MCF 10A (cell line): ENCODE measurements at regions of chr11 and their contacts with region 1.

Region 1: DNA sequence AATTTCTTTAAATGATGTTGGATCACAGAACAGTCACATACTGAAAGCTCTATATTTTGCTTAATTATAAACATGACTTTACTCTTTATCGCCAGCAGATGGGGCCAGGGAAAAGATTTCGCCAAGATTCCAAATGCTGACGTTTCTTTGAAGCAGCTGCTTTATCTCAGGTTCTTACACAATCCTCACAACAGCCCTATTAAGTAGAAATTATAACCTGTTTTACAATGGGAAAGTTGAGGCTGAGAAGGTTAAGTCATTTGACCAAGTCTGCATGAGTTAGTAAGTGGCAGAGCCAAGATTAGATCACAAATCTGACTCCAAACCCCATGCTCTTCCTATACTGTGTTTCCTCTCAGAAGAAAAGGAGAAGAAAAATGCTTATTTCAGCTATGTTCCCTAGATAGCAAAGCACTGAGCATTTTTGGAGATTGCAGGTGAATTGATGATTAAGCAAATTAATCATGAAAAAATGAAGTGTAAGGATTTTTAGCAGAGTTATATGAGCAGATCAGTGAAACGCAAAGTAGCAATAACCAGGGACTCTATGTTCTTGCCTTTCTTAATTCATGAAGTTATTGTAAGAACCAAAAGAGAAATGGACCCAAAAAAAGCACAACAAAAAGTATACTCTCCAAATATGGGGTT is 79.0 kb downstream of the AASDHPPT start:
- DNase-seq: peak; percentile 69
- H3K4me3 Mint-ChIP-seq: no peak overlapping the region
- H3K27ac Mint-ChIP-seq: peak overlapping the region; percentile 82
- H3K4me1 Mint-ChIP-seq: peaks cover 13% of the 10 kb centered on the region
- H3K27me3 Mint-ChIP-seq: no peaks in the 10 kb centered on the region
- CTCF ChIP-seq: peak; percentile 62

Region 2: DNA sequence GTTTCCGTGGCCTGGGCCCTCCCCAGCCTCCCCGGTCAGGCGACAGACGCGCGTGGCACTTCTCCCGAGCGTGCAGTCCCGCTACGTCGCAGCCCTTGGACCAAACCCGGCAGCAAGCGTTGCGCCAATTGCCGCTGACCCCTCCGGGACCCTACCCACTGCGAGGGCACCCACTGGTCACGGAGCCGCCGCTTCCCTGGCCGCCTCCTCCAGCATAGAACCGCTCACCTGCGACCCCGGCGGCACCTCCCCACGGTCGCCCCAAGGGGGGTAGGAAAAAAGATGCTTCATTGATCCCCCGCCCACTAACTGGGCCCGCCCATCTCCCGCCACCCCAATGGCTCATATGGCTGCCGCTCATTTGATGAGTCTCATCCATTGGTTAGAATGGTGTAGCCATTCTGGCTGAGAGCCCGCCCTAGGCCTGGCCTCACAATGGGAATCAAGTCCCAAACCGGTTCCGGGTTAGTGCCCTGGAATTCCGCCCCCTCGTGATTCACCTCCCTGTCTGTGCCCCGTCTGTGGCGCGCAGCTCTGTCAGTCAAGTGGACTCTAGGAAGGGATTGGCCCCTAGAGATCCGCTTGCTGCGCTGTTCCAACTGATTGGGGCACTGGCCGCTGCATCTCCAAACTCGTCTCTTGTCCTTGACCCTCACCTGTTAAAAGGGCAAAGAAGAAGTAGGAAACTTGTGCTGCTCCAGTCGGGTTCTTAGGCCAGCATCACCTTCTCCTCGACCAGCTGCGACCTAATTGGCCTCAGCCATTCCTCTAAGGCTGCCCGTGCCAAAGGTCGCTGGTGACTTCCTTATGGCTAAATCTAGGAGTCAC is 134.2 kb before region 1 on chr11 and contains the start of gene MSANTD4:
- CTCF ChIA-PET with region 1: no interaction called
- POLR2A ChIA-PET with region 1: no interaction called
- intact Hi-C with region 1: no loop called
- DNase-seq: peak; percentile 100
- H3K4me3 Mint-ChIP-seq: peak within 1 kb of the TSS; percentile 96
- H3K27ac Mint-ChIP-seq: peak within 1 kb of the TSS; percentile 75
- H3K4me1 Mint-ChIP-seq: peaks cover 42% of the 10 kb centered on the region
- H3K27me3 Mint-ChIP-seq: no peaks in the 10 kb centered on the region
- CTCF ChIP-seq: no peak
- total RNA-seq, gene MSANTD4: 31.2 and 36.0 TPM in 2 replicates

Region 3: DNA sequence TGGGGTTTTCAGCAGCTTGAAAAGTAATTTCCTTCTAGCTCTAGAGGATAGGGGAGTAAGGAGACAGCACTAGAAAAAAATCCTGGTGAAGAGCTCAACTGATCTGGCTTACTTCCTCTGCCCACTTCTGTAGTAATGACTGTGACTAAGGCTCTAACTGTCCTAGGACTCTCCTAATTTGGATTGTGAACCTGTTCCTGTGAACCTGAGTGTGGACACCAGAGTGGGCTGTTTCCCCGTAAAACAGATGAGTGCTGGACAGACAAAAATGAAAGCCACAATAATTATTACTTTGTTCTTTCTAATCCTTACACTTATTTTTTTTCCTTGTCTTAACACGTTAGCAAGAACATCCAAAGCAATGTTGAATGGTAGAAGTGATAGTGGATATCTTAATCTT is 75.2 kb after region 1 on chr11:
- CTCF ChIA-PET with region 1: interaction called, 3 read pairs
- POLR2A ChIA-PET with region 1: interaction called, 5 read pairs
- intact Hi-C with region 1: loop called (anchors 10 kb)
- DNase-seq: peak; percentile 27
- H3K4me3 Mint-ChIP-seq: no peak overlapping the region
- H3K27ac Mint-ChIP-seq: no peak overlapping the region
- H3K4me1 Mint-ChIP-seq: no peaks in the 10 kb centered on the region
- H3K27me3 Mint-ChIP-seq: no peaks in the 10 kb centered on the region
- CTCF ChIP-seq: peak; percentile 16

Region 4: GRCh38 chr11:106276859-106277436 is 120.5 kb after region 1 on chr11:
- CTCF ChIA-PET with region 1: interaction called, 6 read pairs
- POLR2A ChIA-PET with region 1: interaction called, 4 read pairs
- intact Hi-C with region 1: loop called (anchors 1 kb)
- DNase-seq: peak; percentile 29
- H3K4me3 Mint-ChIP-seq: no peak overlapping the region
- H3K27ac Mint-ChIP-seq: no peak overlapping the region
- H3K4me1 Mint-ChIP-seq: peaks cover 23% of the 10 kb centered on the region
- H3K27me3 Mint-ChIP-seq: no peaks in the 10 kb centered on the region
- CTCF ChIP-seq: peak; percentile 40

Region 5: DNA sequence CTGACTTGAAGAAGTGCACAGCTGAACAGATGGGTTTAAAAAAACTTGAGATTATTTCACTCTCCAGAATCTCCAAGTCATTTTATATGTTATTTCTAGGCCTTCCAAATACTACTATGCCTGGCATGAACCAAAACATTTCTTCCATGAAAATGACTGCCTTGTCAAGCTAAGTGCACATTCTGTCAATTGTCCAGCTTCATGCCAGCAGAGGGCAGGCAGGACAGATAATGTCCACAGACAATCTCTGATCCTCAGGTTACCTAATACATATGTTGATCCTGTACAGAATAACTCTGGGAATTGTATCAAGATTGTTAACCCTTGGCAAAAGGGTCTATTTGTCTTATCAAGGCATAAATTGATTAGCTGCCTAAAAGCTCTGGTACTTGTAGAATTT is 150.5 kb after region 1 on chr11:
- CTCF ChIA-PET with region 1: interaction called, 6 read pairs
- POLR2A ChIA-PET with region 1: interaction called, 3 read pairs
- intact Hi-C with region 1: loop called (anchors 2 kb)
- DNase-seq: peak; percentile 33
- H3K4me3 Mint-ChIP-seq: no peak overlapping the region
- H3K27ac Mint-ChIP-seq: no peak overlapping the region
- H3K4me1 Mint-ChIP-seq: no peaks in the 10 kb centered on the region
- H3K27me3 Mint-ChIP-seq: no peaks in the 10 kb centered on the region
- CTCF ChIP-seq: no peak

Region 6: GRCh38 chr11:106585061-106585460 is 428.6 kb after region 1 on chr11:
- CTCF ChIA-PET with region 1: interaction called, 5 read pairs
- POLR2A ChIA-PET with region 1: no interaction called
- intact Hi-C with region 1: loop called (anchors 1 kb)
- DNase-seq: peak; percentile 39
- H3K4me3 Mint-ChIP-seq: no peak overlapping the region
- H3K27ac Mint-ChIP-seq: no peak overlapping the region
- H3K4me1 Mint-ChIP-seq: no peaks in the 10 kb centered on the region
- H3K27me3 Mint-ChIP-seq: no peaks in the 10 kb centered on the region
- CTCF ChIP-seq: peak; percentile 23

Region 7: DNA sequence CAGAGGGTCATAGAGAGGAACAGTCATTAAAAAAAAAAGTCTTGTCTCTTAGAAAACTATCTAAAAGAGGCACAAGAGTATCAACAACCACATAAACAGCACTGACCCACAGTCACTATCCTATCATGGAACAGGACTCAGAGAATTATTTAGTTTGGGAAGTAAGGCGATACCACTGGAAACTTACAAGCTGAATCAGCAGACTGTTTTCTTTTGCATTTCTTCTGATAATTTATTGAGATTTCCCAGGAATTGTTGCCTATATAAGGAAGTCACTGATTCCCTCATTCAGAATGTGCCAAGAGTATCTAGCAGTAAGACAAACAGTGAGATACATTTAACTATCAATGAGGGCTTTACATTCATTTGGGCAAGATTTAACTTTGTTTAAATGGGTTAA is 557.8 kb after region 1 on chr11:
- CTCF ChIA-PET with region 1: interaction called, 3 read pairs
- POLR2A ChIA-PET with region 1: no interaction called
- intact Hi-C with region 1: loop called (anchors 10 kb)
- DNase-seq: no peak
- H3K4me3 Mint-ChIP-seq: no peak overlapping the region
- H3K27ac Mint-ChIP-seq: no peak overlapping the region
- H3K4me1 Mint-ChIP-seq: no peaks in the 10 kb centered on the region
- H3K27me3 Mint-ChIP-seq: no peaks in the 10 kb centered on the region
- CTCF ChIP-seq: no peak

Region 8: GRCh38 chr11:106745941-106746340 is 589.5 kb after region 1 on chr11:
- CTCF ChIA-PET with region 1: no interaction called
- POLR2A ChIA-PET with region 1: no interaction called
- intact Hi-C with region 1: no loop called
- DNase-seq: no peak
- H3K4me3 Mint-ChIP-seq: no peak overlapping the region
- H3K27ac Mint-ChIP-seq: no peak overlapping the region
- H3K4me1 Mint-ChIP-seq: no peaks in the 10 kb centered on the region
- H3K27me3 Mint-ChIP-seq: no peaks in the 10 kb centered on the region
- CTCF ChIP-seq: no peak

Region 9: GRCh38 chr11:107017433-107018227 is 861.2 kb after region 1 on chr11:
- CTCF ChIA-PET with region 1: no interaction called
- POLR2A ChIA-PET with region 1: no interaction called
- intact Hi-C with region 1: loop called (anchors 5 kb)
- DNase-seq: peak; percentile 44
- H3K4me3 Mint-ChIP-seq: peak overlapping the region; percentile 59
- H3K27ac Mint-ChIP-seq: no peak overlapping the region
- H3K4me1 Mint-ChIP-seq: peaks cover 4% of the 10 kb centered on the region
- H3K27me3 Mint-ChIP-seq: peaks cover 55% of the 10 kb centered on the region
- CTCF ChIP-seq: peak; percentile 40